Cardiac septum (tissue), 1 donor: ENCODE measurements at regions of chrX and their contacts with region 1.

Region 1: GRCh38 chrX:68807818-68808217 is 21.0 kb upstream of the EFNB1 start:
- DNase-seq: no peak

Region 2: GRCh38 chrX:68196939-68197791 is 610.7 kb before region 1 on chrX:
- intact Hi-C with region 1: loop called (anchors 5 kb)
- DNase-seq: no peak

Region 3: GRCh38 chrX:68511255-68511654 is 296.6 kb before region 1 on chrX:
- intact Hi-C with region 1: loop called (anchors 10 kb)
- DNase-seq: no peak

Region 4: DNA sequence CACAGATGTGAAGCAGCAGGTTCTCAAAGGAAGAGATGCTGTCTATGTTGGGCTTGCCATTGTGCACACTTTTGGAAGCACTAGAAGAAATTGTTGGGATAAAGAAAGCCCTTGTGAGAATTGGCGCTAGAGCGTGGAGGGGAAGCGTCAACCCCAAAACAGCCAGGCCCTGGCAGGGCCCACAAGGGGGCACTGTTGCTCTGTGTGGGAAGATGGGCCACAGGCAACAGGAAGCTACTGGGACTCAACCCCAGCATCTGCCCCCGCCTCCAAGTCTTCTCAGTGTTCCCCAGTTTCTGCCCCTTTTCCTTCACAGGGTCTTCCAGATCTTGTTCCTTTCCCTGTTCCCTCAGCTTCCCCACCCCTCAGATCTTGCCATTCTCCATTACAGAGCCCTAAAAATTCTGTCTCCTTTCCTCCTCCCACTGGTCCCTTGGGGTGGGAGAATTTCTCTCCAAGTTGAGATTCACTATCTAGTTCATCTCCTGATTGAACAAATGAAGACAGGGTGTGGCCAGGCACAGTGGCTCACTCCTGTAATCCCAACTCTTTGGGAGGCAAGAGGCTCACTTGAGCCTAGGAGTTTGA is 74.8 kb before region 1 on chrX:
- intact Hi-C with region 1: loop called (anchors 2 kb)
- DNase-seq: peak; percentile 79